Activated CD4-positive, alpha-beta memory T cell treated with anti-CD3 and anti-CD28 coated beads for 36 hours (primary cell): ENCODE measurements at regions of chr17 and their contacts with region 1.

Region 1: GRCh38 chr17:49191917-49192741 is 18.2 kb downstream of the GNGT2 start:
- DNase-seq: peak; percentile 95
- H3K4me3 Mint-ChIP-seq: peak overlapping the region; percentile 83
- H3K27ac Mint-ChIP-seq: peak overlapping the region; percentile 98
- H3K4me1 Mint-ChIP-seq: peaks cover 28% of the 10 kb centered on the region
- H3K27me3 Mint-ChIP-seq: no peaks in the 10 kb centered on the region

Region 2: GRCh38 chr17:47205419-47205963 is 1986.6 kb before region 1 on chr17:
- CTCF ChIA-PET with region 1: no interaction called
- POLR2A ChIA-PET with region 1: no interaction called
- intact Hi-C with region 1: loop called (anchors 10 kb)
- DNase-seq: peak; percentile 83
- H3K4me3 Mint-ChIP-seq: peak overlapping the region; percentile 57
- H3K27ac Mint-ChIP-seq: peak overlapping the region; percentile 95
- H3K4me1 Mint-ChIP-seq: peaks cover 53% of the 10 kb centered on the region
- H3K27me3 Mint-ChIP-seq: no peaks in the 10 kb centered on the region

Region 3: DNA sequence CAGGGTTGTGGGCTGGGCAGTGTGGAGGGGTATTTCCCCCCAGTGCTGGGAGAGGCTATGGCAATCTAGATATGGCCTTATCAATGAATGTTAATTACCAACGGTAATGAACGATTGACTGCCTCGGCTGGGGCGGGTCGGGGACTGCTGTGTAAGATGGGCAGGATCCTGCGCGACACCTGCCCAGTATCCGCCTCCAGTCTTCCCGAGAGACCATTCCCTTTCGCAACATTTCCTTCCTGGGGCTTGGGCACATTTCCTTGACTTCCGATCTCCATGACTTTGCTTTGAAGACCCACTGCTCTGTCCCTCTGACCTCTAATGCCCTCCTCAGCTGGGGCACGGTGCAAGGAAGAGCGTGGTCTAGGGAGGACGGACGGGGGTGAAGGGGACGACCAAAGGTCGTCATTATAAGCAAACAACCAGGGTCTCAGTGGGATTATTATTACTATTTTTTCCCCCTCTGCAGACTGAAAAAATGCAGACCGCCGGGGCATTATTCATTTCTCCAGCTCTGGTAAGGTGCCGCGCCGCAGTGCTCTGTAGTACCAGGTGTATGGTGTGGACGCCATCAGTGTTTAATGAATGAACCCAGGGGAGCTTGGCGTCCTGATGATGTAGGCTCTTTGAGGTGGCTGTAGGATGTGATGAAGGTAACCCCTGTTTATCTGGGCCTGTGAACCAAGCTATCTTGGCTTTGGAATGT is 299.0 kb before region 1 on chr17:
- CTCF ChIA-PET with region 1: no interaction called
- POLR2A ChIA-PET with region 1: no interaction called
- intact Hi-C with region 1: loop called (anchors 2 kb)
- DNase-seq: peak; percentile 24
- H3K4me3 Mint-ChIP-seq: peak overlapping the region; percentile 98
- H3K27ac Mint-ChIP-seq: peak overlapping the region; percentile 96
- H3K4me1 Mint-ChIP-seq: peaks cover 34% of the 10 kb centered on the region
- H3K27me3 Mint-ChIP-seq: no peaks in the 10 kb centered on the region

Region 4: GRCh38 chr17:49180303-49180702 is 11.8 kb before region 1 on chr17:
- CTCF ChIA-PET with region 1: interaction called, 32 read pairs
- POLR2A ChIA-PET with region 1: no interaction called
- intact Hi-C with region 1: no loop called
- DNase-seq: peak; percentile 75
- H3K4me3 Mint-ChIP-seq: no peak overlapping the region
- H3K27ac Mint-ChIP-seq: no peak overlapping the region
- H3K4me1 Mint-ChIP-seq: peaks cover 2% of the 10 kb centered on the region
- H3K27me3 Mint-ChIP-seq: peaks cover 2% of the 10 kb centered on the region

Region 5: GRCh38 chr17:49217651-49218413 is 25.7 kb after region 1 on chr17:
- CTCF ChIA-PET with region 1: interaction called, 8 read pairs
- POLR2A ChIA-PET with region 1: interaction called, 7 read pairs
- intact Hi-C with region 1: loop called (anchors 2 kb)
- DNase-seq: peak; percentile 72
- H3K4me3 Mint-ChIP-seq: peak overlapping the region; percentile 49
- H3K27ac Mint-ChIP-seq: peak overlapping the region; percentile 79
- H3K4me1 Mint-ChIP-seq: peaks cover 62% of the 10 kb centered on the region
- H3K27me3 Mint-ChIP-seq: no peaks in the 10 kb centered on the region

Region 6: DNA sequence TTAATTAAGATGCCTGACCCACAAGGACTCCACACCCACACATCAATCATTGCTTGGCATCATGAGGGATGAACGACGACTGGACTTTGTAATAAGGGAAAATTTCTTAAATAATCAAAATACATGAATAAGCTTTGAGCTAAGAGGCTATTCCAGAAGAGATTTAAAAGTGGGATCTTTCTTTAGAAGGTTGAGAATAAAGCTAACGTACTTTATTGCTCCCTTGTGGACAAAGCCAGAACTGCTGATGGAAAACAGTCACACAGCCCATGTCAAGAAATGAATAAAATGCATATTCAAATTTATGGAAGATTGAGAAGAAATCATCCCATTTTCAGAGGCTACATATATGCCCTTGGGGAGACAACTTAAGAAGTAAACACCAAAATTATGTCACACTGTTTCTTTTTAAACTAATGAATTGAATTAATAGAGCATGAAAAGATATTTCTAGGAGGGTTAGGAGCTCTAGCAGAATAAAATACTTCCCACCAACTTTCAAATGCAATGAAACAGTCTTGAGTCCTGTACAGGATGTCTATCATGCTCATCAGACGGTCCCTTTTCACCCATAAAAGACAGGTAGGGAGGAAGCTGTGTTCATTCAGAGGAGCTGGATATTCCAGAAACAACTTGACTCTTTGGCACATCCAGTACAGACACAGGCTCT is 98.7 kb after region 1 on chr17:
- CTCF ChIA-PET with region 1: interaction called, 3 read pairs
- POLR2A ChIA-PET with region 1: no interaction called
- intact Hi-C with region 1: loop called (anchors 5 kb)
- DNase-seq: no peak
- H3K4me3 Mint-ChIP-seq: no peak overlapping the region
- H3K27ac Mint-ChIP-seq: no peak overlapping the region
- H3K4me1 Mint-ChIP-seq: peaks cover 15% of the 10 kb centered on the region
- H3K27me3 Mint-ChIP-seq: no peaks in the 10 kb centered on the region